ENCODE measurements at regions of chr11 and their contacts with region 1.

Region 1: DNA sequence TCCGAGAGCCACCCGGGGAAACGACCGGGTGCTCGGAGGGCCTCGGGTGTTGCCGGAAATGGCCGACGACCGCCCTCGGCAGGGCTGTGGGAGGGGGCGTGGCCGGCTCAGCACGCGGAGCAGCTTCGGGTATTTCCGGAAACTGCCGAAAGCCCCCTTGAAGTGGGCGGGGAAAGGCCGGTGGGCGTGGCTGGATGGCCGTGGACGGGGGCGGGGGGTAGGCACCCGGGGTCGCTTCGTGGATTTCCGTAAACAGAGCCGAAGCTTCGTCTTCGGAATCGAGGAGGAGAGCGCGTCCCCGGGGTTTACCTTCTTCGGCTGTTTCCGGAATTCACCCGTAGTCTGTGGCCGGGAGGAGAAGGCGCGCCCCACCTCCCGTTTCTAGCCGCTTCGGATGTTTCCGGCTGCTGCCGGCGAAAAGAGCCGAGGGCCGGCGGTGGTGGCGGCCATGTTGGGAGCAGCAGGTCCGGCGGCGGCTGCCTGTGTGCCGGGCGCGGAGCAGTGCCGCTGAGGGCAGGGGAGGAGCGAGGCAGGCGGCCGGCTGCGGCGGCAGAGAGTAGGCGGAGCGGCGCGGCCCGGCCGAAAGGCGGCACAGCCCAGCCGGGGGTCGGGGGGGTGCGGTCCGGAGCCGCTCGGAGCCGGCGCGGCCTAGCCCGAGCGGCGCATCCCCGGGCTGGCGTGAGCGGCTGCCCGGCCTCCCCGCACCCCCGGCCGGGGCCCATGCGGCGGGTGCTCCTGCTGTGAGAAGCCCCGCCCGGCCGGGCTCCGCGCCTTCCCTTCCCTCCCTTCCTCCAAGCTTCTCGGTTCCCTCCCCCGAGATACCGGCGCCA is at the start of gene MARK2:
- DNase-seq: peak; percentile 82 to 98
- ATAC-seq: peak; percentile 80 to 90
- H3K4me3 ChIP-seq: peak within 1 kb of the TSS; percentile 75
- H3K27ac ChIP-seq: peak within 1 kb of the TSS; percentile 95 to 97
- H3K4me1 ChIP-seq: peaks cover 36% of the 10 kb centered on the region
- CTCF ChIP-seq: no peak
- EP300 ChIP-seq: no peak
- POLR2A ChIP-seq: peak; percentile 77
- RAD21 ChIP-seq: no peak
- polyA plus RNA-seq, gene MARK2: 24.7 and 28.4 TPM in 2 replicates

Region 2: DNA sequence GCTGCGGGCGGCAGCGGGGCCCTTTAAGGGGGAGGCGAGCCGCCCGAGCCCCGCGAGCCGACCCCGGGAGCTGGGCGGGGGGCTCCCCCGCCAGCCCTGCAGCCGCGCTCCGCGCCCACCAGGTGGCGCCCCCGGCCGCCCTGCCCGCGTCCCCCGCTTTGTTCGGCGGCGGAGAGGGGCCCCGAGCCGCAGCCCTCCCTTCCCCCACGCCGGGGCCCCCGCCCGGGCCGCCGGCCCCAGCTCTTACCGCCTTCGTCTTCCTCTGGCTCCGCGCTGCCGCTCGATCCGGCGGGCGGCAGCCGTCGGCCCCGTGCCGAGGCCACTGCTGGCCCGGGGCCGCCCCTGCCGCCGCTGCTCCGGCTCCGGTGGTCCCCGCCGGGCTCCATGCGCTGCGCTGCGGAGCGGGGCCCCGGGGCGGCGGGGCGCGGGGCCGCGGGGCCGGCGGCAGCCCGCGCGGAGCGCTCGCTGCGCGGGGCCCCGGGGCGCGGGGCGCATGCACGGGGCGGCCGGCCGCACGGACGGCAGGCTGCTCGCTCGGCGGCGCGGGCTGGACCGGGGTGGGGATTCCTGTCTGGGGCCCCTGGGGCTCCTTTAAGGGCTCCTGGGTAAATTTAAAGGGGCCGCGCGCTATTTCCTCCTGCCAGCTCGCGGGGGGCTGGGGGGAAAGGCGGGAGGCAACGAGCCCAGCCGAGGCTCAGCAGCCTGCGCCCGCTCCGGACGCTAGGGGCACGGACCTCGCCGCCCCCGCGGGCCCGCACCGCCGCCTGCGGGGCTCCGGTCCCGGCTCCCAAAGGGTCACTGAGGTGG is 70.5 kb before region 1 on chr11 and contains the start of gene ZFTA:
- CTCF ChIA-PET with region 1: interaction called, 28 read pairs
- POLR2A ChIA-PET with region 1: no interaction called
- DNase-seq: peak; percentile 51 to 68
- ATAC-seq: peak; percentile 50 to 59
- H3K4me3 ChIP-seq: peak within 1 kb of the TSS; percentile 63
- H3K27ac ChIP-seq: peak within 1 kb of the TSS; percentile 89 to 99
- H3K4me1 ChIP-seq: peaks cover 30% of the 10 kb centered on the region
- CTCF ChIP-seq: peak; percentile 95
- EP300 ChIP-seq: no peak
- POLR2A ChIP-seq: no peak
- RAD21 ChIP-seq: peak; percentile 34 to 81; a peak in 4 of 5 replicates
- polyA plus RNA-seq, gene ZFTA: 2.4 and 3.0 TPM in 2 replicates

Region 3: DNA sequence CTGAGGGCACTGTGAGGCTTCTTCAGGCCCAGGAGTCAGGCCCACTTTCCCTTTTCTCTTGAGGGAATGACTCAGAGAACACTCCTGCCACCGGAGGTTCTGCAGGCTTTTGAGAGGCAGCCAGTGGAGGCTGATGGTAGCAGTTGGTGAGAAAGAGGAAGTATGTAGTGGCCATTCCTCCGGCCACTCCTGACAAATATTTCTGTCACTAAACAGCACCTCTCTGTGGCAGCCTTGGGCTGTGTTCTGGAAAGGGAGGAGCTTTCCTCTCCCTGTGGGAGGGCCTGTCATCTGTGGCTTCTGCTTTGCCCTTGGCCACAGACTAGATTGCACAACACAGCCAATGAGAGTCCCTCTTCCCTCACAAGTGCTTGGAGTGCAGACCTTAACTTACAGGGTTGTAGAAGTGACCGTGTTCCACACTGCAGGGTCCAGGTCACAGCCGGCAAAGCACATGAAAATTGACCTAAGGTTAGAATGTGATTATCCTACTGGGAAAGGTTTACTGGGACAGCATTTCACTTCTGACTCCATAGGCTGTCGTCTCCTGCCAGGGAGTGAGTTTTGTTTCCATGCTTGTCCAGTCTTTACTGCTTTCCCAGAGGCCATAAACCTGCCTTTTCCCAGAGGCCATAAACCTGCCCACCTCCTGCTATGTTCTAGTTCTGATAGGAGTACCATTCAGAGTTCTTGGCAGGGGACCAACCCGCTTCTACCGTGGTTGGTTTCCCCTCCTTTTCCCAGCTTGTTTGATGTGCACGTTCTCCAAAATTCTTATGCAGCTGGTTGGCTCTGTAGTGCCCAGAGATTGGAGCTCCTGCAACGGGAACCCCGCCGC is 33.3 kb after region 1 on chr11:
- CTCF ChIA-PET with region 1: interaction called, 32 read pairs
- POLR2A ChIA-PET with region 1: interaction called, 13 read pairs
- DNase-seq: peak; percentile 71 to 86
- ATAC-seq: peak; percentile 92 to 96
- H3K4me3 ChIP-seq: 0 out of 3 replicates have a peak overlapping the region, but pooled peaks have one; percentile 6
- H3K27ac ChIP-seq: peak overlapping the region; percentile 2 to 22; a peak in 2 of 6 replicates
- H3K4me1 ChIP-seq: peaks cover 48% of the 10 kb centered on the region
- CTCF ChIP-seq: peak; percentile 48
- EP300 ChIP-seq: no peak
- POLR2A ChIP-seq: no peak
- RAD21 ChIP-seq: peak; percentile 53 to 58

Region 4: DNA sequence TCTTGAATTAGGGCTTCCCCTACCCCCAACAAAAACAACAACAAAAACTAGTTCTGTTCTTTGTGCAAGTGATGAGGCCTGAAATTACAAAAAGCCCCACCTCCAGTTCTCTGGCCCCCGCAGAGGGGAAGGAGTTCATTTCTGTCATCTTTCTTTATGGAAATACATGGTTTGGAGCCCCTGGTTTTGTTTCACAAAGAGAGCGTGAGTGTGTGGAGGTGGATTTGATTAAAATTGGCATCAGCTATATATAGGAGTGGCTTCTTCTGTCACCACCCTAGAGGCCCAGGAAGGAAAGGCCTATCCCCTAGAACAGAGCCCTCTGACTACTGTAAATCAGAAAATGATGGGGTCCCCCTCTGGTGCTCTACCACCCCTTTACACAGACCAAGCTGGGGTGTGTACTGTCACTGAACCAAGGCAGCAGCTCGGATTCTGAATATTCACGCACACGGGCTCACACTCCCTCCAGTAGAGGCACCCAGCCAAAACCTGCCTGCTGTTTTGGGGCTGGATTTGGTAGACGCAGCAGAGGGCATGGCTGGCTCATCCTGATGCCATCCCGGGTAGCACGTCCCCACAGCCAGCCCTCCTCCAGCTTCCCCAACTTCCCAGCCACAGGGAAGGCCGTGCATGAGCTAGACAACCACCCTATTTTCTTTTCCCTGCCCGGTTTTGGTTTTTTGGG is 58.7 kb after region 1 on chr11:
- CTCF ChIA-PET with region 1: interaction called, 58 read pairs
- POLR2A ChIA-PET with region 1: interaction called, 3 read pairs
- DNase-seq: no peak
- ATAC-seq: no peak
- H3K4me3 ChIP-seq: no peak overlapping the region
- H3K27ac ChIP-seq: no peak overlapping the region
- H3K4me1 ChIP-seq: no peaks in the 10 kb centered on the region
- CTCF ChIP-seq: no peak
- EP300 ChIP-seq: no peak
- POLR2A ChIP-seq: no peak
- RAD21 ChIP-seq: no peak

Region 5: DNA sequence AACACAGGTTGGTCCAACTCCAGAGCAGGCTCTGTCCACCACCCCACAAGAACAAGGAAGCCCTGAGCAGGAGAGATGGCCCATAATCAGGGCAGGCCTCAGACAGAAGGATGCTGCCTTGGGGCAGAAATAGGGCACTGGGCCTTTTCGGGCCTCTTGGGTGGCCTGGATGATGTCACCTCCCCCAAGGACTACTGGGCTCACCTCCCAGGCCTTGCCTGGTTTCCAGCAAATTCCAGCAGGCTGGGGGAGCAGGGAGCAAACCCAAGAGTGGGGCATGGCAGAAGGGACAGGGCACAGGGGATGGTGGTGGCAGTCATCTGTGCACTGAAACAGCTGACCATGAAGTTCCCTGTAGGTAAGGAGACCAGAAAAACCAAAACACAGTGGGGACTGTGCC is 94.6 kb after region 1 on chr11:
- CTCF ChIA-PET with region 1: interaction called, 61 read pairs
- POLR2A ChIA-PET with region 1: interaction called, 6 read pairs
- DNase-seq: no peak
- ATAC-seq: no peak
- H3K4me3 ChIP-seq: no peak overlapping the region
- H3K27ac ChIP-seq: 0 out of 6 replicates have a peak overlapping the region, but pooled peaks of 1 of the 2 experiments have one; percentile 25
- H3K4me1 ChIP-seq: peaks cover 5% of the 10 kb centered on the region
- CTCF ChIP-seq: no peak
- EP300 ChIP-seq: no peak
- POLR2A ChIP-seq: no peak
- RAD21 ChIP-seq: no peak

Region 6: DNA sequence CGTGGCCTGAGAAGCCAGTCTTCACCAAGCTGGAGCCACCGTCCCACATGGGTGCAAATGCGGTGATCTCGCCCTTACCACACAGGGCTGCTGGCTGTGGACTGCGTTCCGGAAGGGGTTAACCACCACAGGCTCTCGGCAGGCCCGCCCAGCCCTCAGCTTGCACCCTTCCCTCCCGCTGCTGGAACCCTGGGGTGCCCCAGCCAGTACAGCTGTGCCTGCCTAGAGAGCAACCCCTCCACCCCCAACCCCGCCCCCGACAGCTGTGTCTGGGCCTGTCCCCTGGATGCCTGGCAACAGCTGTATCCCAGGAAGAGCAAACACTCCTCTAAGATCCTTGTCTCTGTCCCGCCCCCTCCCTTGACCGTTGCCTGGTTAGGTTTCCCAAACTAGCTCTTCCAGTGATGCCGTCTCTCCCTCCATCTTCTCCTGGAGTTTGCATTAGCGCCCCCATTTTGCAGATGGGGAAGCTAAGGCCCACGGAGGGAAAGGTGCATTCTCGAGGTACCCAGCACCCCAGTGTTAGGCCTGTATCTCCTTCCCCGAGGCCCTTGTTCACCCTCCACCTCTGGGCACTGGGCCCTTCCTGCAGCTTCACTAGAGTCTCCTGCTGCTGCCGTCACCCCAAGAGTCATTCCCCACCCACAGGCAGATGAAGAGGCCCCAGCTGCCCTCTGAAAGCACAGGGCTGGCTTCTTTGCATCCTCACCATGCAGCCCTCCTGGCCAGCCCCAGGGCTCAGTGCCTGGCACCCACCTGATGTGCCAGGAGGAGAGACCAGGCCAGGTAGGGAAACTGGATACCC is 122.9 kb after region 1 on chr11:
- CTCF ChIA-PET with region 1: interaction called, 15 read pairs
- POLR2A ChIA-PET with region 1: no interaction called
- DNase-seq: peak in 1 of 2 experiments; percentile 21
- ATAC-seq: peak; percentile 28 to 57; a peak in 3 of 6 replicates
- H3K4me3 ChIP-seq: no peak overlapping the region
- H3K27ac ChIP-seq: no peak overlapping the region
- H3K4me1 ChIP-seq: peaks cover 6% of the 10 kb centered on the region; the same call in 1 of the 3 replicates
- CTCF ChIP-seq: no peak
- EP300 ChIP-seq: no peak
- POLR2A ChIP-seq: no peak
- RAD21 ChIP-seq: no peak

Measured in A549 (cell line).